ENCODE measurements at regions of chrX and their contacts with region 1.

Region 1: GRCh38 chrX:101407748-101408531 is at the starts of genes GLA and HNRNPH2:
- DNase-seq: peak; percentile 64 to 94 (median 88)
- ATAC-seq: peak; percentile 96
- H3K4me3 ChIP-seq: peak within 1 kb of the TSS; percentile 82
- H3K4me3 Mint-ChIP-seq: peak within 1 kb of the TSS; percentile 90 to 98 (median 95)
- H3K27ac ChIP-seq: peak within 1 kb of the TSS; percentile 97
- H3K27ac Mint-ChIP-seq: peak within 1 kb of the TSS; percentile 97 to 100 (median 99)
- H3K4me1 ChIP-seq: peaks cover 11 to 19% of the 10 kb centered on the region in 2 donors
- H3K4me1 Mint-ChIP-seq: peaks cover 11 to 39% (median 28%) of the 10 kb centered on the region in 7 donors
- H3K27me3 ChIP-seq: no peaks in the 10 kb centered on the region
- H3K27me3 Mint-ChIP-seq: peaks cover 0 to 2% (median 0%) of the 10 kb centered on the region in 5 donors
- total RNA-seq, gene GLA: 12.5 to 40.1 (median 27.1) TPM
- total RNA-seq, gene HNRNPH2: 32.1 to 46.3 (median 41.5) TPM

Region 2: DNA sequence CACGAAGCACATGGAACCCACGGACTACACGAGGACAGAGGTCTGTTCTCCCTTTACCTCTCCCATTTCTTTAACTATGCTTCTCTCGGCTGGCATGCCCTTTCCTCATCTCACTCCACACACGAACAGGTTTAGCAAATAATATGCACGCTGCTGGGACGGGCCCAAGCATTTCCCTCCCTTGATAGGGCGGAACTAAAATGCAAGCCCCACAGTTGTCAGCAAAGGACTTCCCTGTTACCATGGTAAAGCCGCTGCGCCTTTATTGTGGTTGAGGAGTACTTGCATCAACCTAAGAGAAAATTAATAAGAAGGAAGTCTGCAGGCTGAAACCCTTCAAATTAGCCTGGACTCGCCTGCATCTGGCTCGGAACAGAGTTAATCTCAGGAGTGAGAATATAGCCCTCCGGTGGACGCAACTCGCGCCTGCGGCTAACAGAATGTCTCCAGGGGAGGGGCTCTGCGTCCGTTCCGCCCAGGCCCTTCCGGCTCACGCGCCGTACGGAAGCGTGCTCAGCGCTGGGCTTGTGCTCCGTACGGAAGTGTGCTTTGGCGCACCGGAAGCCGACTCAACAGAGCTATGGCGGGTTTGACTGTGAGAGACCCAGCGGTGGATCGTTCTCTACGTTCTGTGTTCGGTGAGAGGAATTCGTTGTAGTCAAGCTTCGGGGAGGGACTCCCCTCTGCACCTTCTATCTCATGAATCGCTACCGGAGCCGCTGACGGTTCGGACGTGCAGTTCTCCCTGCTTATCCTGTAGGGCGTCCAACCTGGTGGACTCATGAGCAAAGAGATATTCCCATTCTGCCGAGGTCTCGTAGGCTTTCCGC is 587.9 kb before region 1 on chrX and contains the start of gene CSTF2:
- CTCF ChIA-PET with region 1: no interaction called
- POLR2A ChIA-PET with region 1: interaction called, 6 read pairs
- intact Hi-C with region 1: loop called (anchors 1 to 5 kb)
- DNase-seq: peak; percentile 58 to 87 (median 81)
- ATAC-seq: peak; percentile 98
- H3K4me3 ChIP-seq: peak within 1 kb of the TSS; percentile 68
- H3K4me3 Mint-ChIP-seq: peak within 1 kb of the TSS; percentile 85 to 96 (median 91)
- H3K27ac ChIP-seq: peak within 1 kb of the TSS; percentile 80
- H3K27ac Mint-ChIP-seq: peak within 1 kb of the TSS; percentile 85 to 97 (median 93)
- H3K4me1 ChIP-seq: no peaks in the 10 kb centered on the region
- H3K4me1 Mint-ChIP-seq: peaks cover 5 to 10% (median 6%) of the 10 kb centered on the region in 7 donors
- H3K27me3 ChIP-seq: no peaks in the 10 kb centered on the region
- H3K27me3 Mint-ChIP-seq: peaks cover 0 to 12% (median 4%) of the 10 kb centered on the region in 5 donors
- total RNA-seq, gene CSTF2: 8.6 to 41.8 (median 16.1) TPM

Region 3: DNA sequence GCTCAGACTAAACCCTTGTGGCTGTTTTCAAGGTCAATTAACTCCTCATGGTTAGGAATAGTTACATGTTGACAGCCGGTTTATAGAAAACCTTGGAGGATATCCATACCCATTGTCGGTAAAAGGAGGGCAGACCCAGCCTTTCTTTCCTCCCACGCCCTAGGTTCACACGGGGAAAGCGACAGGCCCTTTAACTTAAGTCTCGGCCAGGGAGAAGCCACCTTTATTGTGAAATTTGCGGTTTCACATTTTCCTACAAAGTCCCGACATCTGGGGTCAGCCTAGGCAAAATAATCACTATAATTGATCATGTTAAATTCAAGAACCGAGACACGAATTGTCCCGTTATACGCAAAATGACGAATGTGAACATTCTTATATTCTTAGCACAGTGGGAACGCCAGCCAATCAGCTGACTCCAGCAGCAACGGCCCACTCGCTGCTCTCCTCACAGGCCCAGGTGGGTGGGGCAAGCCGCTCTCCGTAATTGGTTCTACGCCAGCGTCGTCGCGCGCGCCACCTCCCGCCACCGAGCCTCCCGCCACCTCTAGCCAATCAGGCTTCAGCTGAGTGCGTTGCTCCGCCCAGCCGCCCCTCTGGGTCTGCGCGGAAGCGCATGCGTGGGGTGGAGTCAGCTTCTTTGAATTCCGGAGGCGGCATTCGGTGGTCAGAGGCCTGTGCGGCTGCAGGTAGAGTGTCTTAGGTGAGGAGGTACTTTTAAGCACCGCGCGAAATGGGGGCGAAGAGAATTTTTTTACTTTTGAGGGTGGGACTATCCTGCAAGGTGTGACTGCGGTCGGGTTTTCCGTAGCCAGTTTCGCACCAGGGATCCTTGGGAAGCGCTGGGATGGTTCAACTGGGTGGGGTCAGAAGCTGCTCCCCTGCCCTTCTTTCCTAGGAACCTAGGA is 310.1 kb before region 1 on chrX and contains the start of gene CENPI:
- CTCF ChIA-PET with region 1: no interaction called
- POLR2A ChIA-PET with region 1: no interaction called
- intact Hi-C with region 1: loop called in 1 of 2 experiments (anchors 1 kb)
- DNase-seq: peak; percentile 84 to 95 (median 93)
- ATAC-seq: peak; percentile 100
- H3K4me3 ChIP-seq: peak within 1 kb of the TSS; percentile 70
- H3K4me3 Mint-ChIP-seq: peak within 1 kb of the TSS; percentile 69 to 95 (median 90)
- H3K27ac ChIP-seq: peak within 1 kb of the TSS; percentile 84
- H3K27ac Mint-ChIP-seq: peak within 1 kb of the TSS; percentile 83 to 99 (median 93)
- H3K4me1 ChIP-seq: peaks cover 0 to 3% of the 10 kb centered on the region in 2 donors
- H3K4me1 Mint-ChIP-seq: peaks cover 0 to 28% (median 9%) of the 10 kb centered on the region in 7 donors
- H3K27me3 ChIP-seq: no peaks in the 10 kb centered on the region
- H3K27me3 Mint-ChIP-seq: no peaks in the 10 kb centered on the region
- total RNA-seq, gene CENPI: 0.24 to 18.4 (median 0.88) TPM

Region 4: GRCh38 chrX:101357199-101357795 is 50.6 kb before region 1 on chrX:
- CTCF ChIA-PET with region 1: no interaction called
- POLR2A ChIA-PET with region 1: no interaction called
- intact Hi-C with region 1: no loop called
- DNase-seq: no peak
- ATAC-seq: no peak
- H3K4me3 ChIP-seq: no peak overlapping the region
- H3K4me3 Mint-ChIP-seq: no peak overlapping the region
- H3K27ac ChIP-seq: no peak overlapping the region
- H3K27ac Mint-ChIP-seq: peak overlapping the region in 1 of 9 donors; percentile 7
- H3K4me1 ChIP-seq: no peaks in the 10 kb centered on the region
- H3K4me1 Mint-ChIP-seq: peaks cover 0 to 4% (median 0%) of the 10 kb centered on the region in 7 donors
- H3K27me3 ChIP-seq: no peaks in the 10 kb centered on the region
- H3K27me3 Mint-ChIP-seq: peaks cover 0 to 3% (median 0%) of the 10 kb centered on the region in 5 donors

Region 5: DNA sequence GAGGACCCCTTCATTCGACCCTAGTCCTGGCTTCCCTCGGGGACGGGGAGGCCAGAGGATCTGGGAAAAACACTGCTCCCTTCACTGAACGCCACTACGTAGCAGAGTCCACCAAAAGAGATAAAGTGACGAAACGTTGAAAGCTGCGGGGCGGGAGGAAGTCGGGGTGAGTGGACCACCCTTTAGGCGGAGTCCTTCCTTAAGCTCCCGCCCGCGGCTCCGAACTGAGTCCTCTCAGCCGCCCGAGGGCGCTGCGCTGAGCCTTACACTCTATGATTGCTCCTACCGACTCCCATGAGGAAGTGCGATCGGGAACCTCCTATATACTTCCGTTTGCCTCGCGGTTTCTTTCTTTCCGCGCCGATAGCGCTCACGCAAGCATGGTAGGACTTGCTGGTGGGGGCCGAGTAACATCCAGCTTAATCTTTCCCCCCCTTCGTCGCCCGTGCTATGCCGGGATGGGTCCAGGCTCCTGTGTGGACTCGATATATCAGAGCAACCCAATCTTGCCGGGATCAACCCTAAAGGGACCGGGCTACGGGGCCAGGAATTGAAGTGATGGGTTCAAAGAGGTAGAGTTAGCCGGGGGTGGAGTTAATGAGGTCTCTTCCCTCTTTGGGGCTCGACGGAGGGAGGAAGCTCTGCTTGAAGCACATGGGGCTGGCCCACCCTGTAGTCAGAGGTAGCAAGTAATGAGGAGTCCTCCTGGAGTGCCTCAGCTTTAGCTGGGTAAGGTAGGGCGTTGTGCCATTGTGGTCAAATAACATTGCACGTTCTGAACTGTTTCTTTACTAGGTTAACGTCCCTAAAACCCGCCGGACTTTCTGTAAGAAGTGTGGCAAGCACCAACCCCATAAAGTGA is 17.0 kb before region 1 on chrX and contains the start of gene RPL36A:
- CTCF ChIA-PET with region 1: no interaction called
- POLR2A ChIA-PET with region 1: interaction called, 6 read pairs
- intact Hi-C with region 1: loop called (anchors 1 kb)
- DNase-seq: peak; percentile 41 to 75 (median 66)
- ATAC-seq: peak; percentile 97
- H3K4me3 ChIP-seq: peak within 1 kb of the TSS; percentile 66
- H3K4me3 Mint-ChIP-seq: peak within 1 kb of the TSS; percentile 81 to 96 (median 90)
- H3K27ac ChIP-seq: peak within 1 kb of the TSS; percentile 80
- H3K27ac Mint-ChIP-seq: peak within 1 kb of the TSS; percentile 80 to 97 (median 94)
- H3K4me1 ChIP-seq: peaks cover 4 to 5% of the 10 kb centered on the region in 2 donors
- H3K4me1 Mint-ChIP-seq: peaks cover 0 to 35% (median 18%) of the 10 kb centered on the region in 7 donors
- H3K27me3 ChIP-seq: no peaks in the 10 kb centered on the region
- H3K27me3 Mint-ChIP-seq: no peaks in the 10 kb centered on the region
- total RNA-seq, gene RPL36A: 113 to 342 (median 282) TPM

Region 6: GRCh38 chrX:101658661-101659491 is 250.9 kb after region 1 on chrX:
- CTCF ChIA-PET with region 1: no interaction called
- POLR2A ChIA-PET with region 1: no interaction called
- intact Hi-C with region 1: loop called in 1 of 2 experiments (anchors 2 kb)
- DNase-seq: peak in 8 of 9 donors; percentile 50 to 70 (median 52)
- ATAC-seq: peak; percentile 91
- H3K4me3 ChIP-seq: peak overlapping the region; percentile 61
- H3K4me3 Mint-ChIP-seq: peak overlapping the region; percentile 80 to 91 (median 88)
- H3K27ac ChIP-seq: peak overlapping the region; percentile 73
- H3K27ac Mint-ChIP-seq: peak overlapping the region; percentile 49 to 90 (median 85)
- H3K4me1 ChIP-seq: no peaks in the 10 kb centered on the region
- H3K4me1 Mint-ChIP-seq: peaks cover 8 to 26% (median 14%) of the 10 kb centered on the region in 7 donors
- H3K27me3 ChIP-seq: no peaks in the 10 kb centered on the region
- H3K27me3 Mint-ChIP-seq: peaks cover 0 to 9% (median 0%) of the 10 kb centered on the region in 5 donors

Region 7: DNA sequence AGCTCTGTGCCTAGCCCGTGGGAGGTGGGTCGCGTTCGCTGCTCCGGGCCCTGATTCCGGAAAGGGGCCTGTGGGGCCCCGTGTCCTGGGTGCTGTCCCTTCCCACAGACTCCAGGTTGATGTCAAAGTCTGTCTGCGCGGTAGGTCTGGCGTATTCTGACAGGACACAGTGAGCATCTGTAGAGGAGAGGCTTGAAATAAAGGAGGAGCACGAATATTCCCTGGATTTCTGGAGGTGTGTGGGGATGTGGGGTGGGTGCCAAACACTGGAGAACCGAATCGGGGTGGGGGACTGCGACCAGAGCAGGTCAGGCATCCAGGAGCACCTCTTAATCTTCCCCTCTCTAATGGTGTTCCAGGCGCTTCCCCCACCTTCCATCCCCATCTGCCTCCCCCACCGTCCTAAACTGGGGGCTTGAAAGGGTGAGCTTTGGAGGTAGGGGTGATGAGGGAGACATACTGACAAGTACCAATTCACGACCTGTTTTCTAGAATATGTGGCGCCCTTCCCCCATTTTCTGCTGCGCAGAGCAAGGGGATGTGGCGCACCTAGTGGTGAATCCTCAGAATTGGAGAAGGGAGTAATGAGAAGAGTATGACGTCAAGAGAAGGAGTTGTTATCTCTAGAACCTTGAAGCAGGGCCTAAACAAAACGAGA is 1244.2 kb after region 1 on chrX:
- CTCF ChIA-PET with region 1: no interaction called
- POLR2A ChIA-PET with region 1: interaction called, 4 read pairs
- intact Hi-C with region 1: loop called in 1 of 2 experiments (anchors 5 kb)
- DNase-seq: peak in 8 of 9 donors; percentile 19 to 83 (median 78)
- ATAC-seq: peak; percentile 89
- H3K4me3 ChIP-seq: peak overlapping the region; percentile 83
- H3K4me3 Mint-ChIP-seq: peak overlapping the region; percentile 83 to 100 (median 94)
- H3K27ac ChIP-seq: peak overlapping the region; percentile 88
- H3K27ac Mint-ChIP-seq: peak overlapping the region; percentile 69 to 99 (median 95)
- H3K4me1 ChIP-seq: peaks cover 4 to 5% of the 10 kb centered on the region in 2 donors
- H3K4me1 Mint-ChIP-seq: peaks cover 13 to 48% (median 35%) of the 10 kb centered on the region in 7 donors
- H3K27me3 ChIP-seq: no peaks in the 10 kb centered on the region
- H3K27me3 Mint-ChIP-seq: peaks cover 0 to 9% (median 0%) of the 10 kb centered on the region in 5 donors

Region 8: GRCh38 chrX:102768987-102769761 is 1361.2 kb after region 1 on chrX:
- CTCF ChIA-PET with region 1: no interaction called
- POLR2A ChIA-PET with region 1: no interaction called
- intact Hi-C with region 1: loop called in 1 of 2 experiments (anchors 2 kb)
- DNase-seq: peak; percentile 41 to 81 (median 72)
- ATAC-seq: peak; percentile 90
- H3K4me3 ChIP-seq: peak overlapping the region; percentile 79
- H3K4me3 Mint-ChIP-seq: peak overlapping the region; percentile 83 to 98 (median 96)
- H3K27ac ChIP-seq: peak overlapping the region; percentile 78
- H3K27ac Mint-ChIP-seq: peak overlapping the region; percentile 72 to 99 (median 97)
- H3K4me1 ChIP-seq: no peaks in the 10 kb centered on the region
- H3K4me1 Mint-ChIP-seq: peaks cover 0 to 19% (median 11%) of the 10 kb centered on the region in 7 donors
- H3K27me3 ChIP-seq: no peaks in the 10 kb centered on the region
- H3K27me3 Mint-ChIP-seq: no peaks in the 10 kb centered on the region

Measured in naive thymus-derived CD4-positive, alpha-beta T cell (primary cell).